ENCODE measurements at regions of chr16 and their contacts with region 1.

Region 1: GRCh38 chr16:82456683-82457082 is 170.1 kb upstream of the CDH13 start:
- DNase-seq: peak; percentile 42
- H3K4me3 Mint-ChIP-seq: no peak overlapping the region
- H3K27ac Mint-ChIP-seq: no peak overlapping the region
- H3K4me1 Mint-ChIP-seq: no peaks in the 10 kb centered on the region
- H3K27me3 Mint-ChIP-seq: no peaks in the 10 kb centered on the region

Region 2: GRCh38 chr16:82414476-82414875 is 42.2 kb before region 1 on chr16:
- CTCF ChIA-PET with region 1: no interaction called
- POLR2A ChIA-PET with region 1: no interaction called
- DNase-seq: no peak
- H3K4me3 Mint-ChIP-seq: no peak overlapping the region
- H3K27ac Mint-ChIP-seq: no peak overlapping the region
- H3K4me1 Mint-ChIP-seq: no peaks in the 10 kb centered on the region
- H3K27me3 Mint-ChIP-seq: no peaks in the 10 kb centered on the region

Region 3: DNA sequence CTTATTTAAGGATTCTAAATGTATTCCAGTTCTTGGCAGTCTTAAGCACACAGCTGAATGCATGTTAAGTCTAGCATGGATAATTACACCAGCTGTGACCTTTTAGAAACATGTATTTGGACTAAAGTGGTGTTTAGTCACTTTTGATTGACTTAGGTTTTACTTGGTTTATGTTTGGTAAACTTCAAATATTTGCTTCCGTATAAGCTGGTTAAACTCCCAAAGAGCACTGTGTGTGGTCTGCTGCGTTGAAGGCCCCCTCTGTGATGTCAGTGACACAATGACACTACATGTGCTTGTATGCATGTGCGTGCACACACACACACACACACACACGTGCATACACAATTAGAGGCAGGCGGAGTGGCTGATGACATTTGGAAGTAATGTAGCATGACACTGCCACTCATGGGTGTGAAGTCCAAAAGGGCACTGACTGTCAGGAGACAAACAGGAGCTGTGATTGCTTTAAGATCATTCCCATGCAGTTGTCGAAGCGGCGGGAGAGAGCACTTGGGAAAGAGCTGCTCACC is 14.0 kb after region 1 on chr16:
- CTCF ChIA-PET with region 1: interaction called, 15 read pairs
- POLR2A ChIA-PET with region 1: interaction called, 3 read pairs
- DNase-seq: no peak
- H3K4me3 Mint-ChIP-seq: no peak overlapping the region
- H3K27ac Mint-ChIP-seq: no peak overlapping the region
- H3K4me1 Mint-ChIP-seq: no peaks in the 10 kb centered on the region
- H3K27me3 Mint-ChIP-seq: peaks cover 3% of the 10 kb centered on the region

Measured in activated CD4-positive, alpha-beta memory T cell treated with anti-CD3 and anti-CD28 coated beads, Interleukin-2, amount 10 ng/mL, durations not matched to agents 7 days and 5 days (primary cell).